Heart right ventricle (tissue), 16 donors: ENCODE measurements at regions of chr17 and their contacts with region 1.

Region 1: GRCh38 chr17:42618442-42619150 is 9.1 kb downstream of the TUBG1 start:
- DNase-seq: peak; percentile 48 to 70
- ATAC-seq: peak; percentile 87 to 98 (median 94)
- H3K4me3 ChIP-seq: peak overlapping the region in 3 of 10 donors; percentile 1 to 26 (median 15)
- H3K27ac ChIP-seq: peak overlapping the region; percentile 12 to 83 (median 73)
- H3K4me1 ChIP-seq: peaks cover 0 to 22% (median 16%) of the 10 kb centered on the region in 9 donors
- H3K27me3 ChIP-seq: no peaks in the 10 kb centered on the region
- CTCF ChIP-seq: peak in 7 of 9 donors; percentile 23 to 58 (median 34)

Region 2: GRCh38 chr17:42475835-42476234 is 142.8 kb before region 1 on chr17:
- intact Hi-C with region 1: no loop called
- DNase-seq: no peak
- ATAC-seq: peak in 3 of 8 donors; percentile 18 to 52 (median 33)
- H3K4me3 ChIP-seq: no peak overlapping the region
- H3K27ac ChIP-seq: peak overlapping the region in 2 of 10 donors; percentile 38 to 68
- H3K4me1 ChIP-seq: peaks cover 0 to 16% (median 0%) of the 10 kb centered on the region in 9 donors
- H3K27me3 ChIP-seq: no peaks in the 10 kb centered on the region
- CTCF ChIP-seq: no peak

Region 3: DNA sequence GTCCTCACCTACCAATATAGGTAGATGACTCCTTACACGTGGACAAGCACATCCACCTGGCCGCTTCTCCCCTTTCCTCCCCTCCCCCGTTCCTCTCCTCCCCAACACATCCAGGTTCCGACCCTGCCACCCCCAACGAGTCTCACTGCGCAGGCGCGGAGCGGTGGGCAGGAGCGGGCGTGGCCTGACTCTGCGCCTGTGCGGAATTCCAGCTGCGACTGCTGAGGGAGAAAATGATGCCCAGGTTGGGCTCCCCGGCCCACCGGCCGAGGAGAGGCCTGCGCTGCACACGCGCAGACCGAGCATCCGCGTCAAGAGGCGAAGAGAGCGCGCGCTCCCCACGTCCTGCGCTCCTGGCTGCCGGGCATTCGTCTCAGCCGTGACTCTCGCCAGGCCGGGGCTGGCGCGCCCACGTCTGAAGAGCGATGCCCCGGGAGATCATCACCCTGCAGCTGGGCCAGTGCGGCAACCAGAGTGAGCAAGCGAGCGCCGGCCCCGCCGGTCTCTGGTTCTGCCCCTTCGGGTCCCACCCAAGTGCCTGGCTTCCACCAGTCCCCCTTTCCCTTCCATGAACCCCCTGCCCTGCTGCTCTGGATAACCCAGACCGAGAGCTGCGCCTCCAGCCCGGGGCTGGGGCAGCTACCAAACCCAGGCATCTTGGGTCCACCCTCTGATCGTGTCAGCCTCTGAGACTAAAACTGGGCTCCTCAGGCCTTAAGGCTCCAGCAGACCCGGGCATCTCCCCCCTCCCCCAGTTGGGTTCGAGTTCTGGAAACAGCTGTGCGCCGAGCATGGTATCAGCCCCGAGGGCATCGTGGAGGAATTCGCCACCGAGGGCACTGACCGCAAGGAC is 40.7 kb after region 1 on chr17 and contains the start of gene TUBG2:
- intact Hi-C with region 1: loop called in 4 of 10 experiments (anchors 5 to 10 kb)
- DNase-seq: peak; percentile 87 to 92
- ATAC-seq: peak; percentile 94 to 97 (median 94)
- H3K4me3 ChIP-seq: peak within 1 kb of the TSS; percentile 23 to 88 (median 74)
- H3K27ac ChIP-seq: peak within 1 kb of the TSS in 9 of 10 donors; percentile 44 to 90 (median 80)
- H3K4me1 ChIP-seq: peaks cover 0 to 26% (median 13%) of the 10 kb centered on the region in 9 donors
- H3K27me3 ChIP-seq: peaks cover 0 to under 1% (median 0%) of the 10 kb centered on the region in 7 donors
- CTCF ChIP-seq: no peak
- total RNA-seq, gene TUBG2: 10.6 to 20.4 (median 14.7) TPM

Region 4: DNA sequence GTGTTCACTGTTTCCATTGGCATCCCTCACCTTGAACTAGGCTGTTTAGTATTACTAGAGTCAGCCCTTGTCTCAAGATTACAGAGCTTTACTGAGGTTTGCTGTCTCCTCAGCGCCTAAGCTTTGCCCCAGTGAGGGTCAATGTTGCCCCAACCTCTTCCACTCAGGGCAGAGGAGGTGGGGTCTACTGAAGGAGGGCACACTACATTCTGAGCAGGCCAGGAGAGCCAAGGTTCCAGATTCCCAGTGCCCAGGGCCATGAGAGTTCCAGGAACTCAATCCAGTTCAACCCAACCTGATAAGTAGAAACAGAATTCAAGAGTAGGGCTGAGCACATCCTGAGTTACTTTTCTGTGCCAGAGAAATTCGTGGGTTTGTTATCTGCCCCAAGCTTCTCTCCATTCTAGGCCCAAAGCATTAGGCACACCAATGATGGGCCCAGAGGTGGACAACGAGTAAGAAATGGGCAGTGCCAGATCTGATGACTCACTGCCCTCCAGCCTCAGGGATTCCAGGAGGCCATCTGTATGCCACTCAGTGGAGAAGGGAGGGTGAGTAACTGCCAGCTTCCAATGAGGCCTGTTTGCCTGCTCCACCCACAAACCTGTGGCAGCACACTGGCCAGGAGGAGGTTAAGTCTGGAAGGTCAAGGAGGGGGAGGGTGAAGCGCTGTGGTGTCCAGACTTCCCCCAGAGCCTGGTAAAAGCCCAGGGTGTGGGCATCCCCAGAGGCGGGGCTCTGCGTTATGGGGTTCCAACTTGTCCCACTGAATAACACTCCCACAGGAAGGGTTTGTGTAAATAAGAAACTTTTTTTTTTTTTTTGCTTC is 48.7 kb after region 1 on chr17:
- intact Hi-C with region 1: loop called in 2 of 10 experiments (anchors 10 kb)
- DNase-seq: peak in 1 of 2 donors; percentile 36
- ATAC-seq: peak; percentile 27 to 80 (median 64)
- H3K4me3 ChIP-seq: no peak overlapping the region
- H3K27ac ChIP-seq: peak overlapping the region; percentile 53 to 86 (median 74)
- H3K4me1 ChIP-seq: peaks cover 10 to 43% (median 27%) of the 10 kb centered on the region in 9 donors
- H3K27me3 ChIP-seq: peaks cover 0 to 31% (median 0%) of the 10 kb centered on the region in 7 donors
- CTCF ChIP-seq: no peak